MCF 10A (cell line): ENCODE measurements at regions of chr1 and their contacts with region 1.

Region 1: GRCh38 chr1:232837087-232837486 is 31.9 kb downstream of the MAP10 start:
- DNase-seq: peak; percentile 33
- H3K4me3 Mint-ChIP-seq: no peak overlapping the region
- H3K27ac Mint-ChIP-seq: no peak overlapping the region
- H3K4me1 Mint-ChIP-seq: peaks cover 4% of the 10 kb centered on the region
- H3K27me3 Mint-ChIP-seq: no peaks in the 10 kb centered on the region
- CTCF ChIP-seq: no peak

Region 2: GRCh38 chr1:232012773-232013386 is 824.2 kb before region 1 on chr1:
- CTCF ChIA-PET with region 1: no interaction called
- POLR2A ChIA-PET with region 1: no interaction called
- intact Hi-C with region 1: no loop called
- DNase-seq: peak; percentile 30
- H3K4me3 Mint-ChIP-seq: no peak overlapping the region
- H3K27ac Mint-ChIP-seq: no peak overlapping the region
- H3K4me1 Mint-ChIP-seq: peaks cover 4% of the 10 kb centered on the region
- H3K27me3 Mint-ChIP-seq: no peaks in the 10 kb centered on the region
- CTCF ChIP-seq: no peak

Region 3: DNA sequence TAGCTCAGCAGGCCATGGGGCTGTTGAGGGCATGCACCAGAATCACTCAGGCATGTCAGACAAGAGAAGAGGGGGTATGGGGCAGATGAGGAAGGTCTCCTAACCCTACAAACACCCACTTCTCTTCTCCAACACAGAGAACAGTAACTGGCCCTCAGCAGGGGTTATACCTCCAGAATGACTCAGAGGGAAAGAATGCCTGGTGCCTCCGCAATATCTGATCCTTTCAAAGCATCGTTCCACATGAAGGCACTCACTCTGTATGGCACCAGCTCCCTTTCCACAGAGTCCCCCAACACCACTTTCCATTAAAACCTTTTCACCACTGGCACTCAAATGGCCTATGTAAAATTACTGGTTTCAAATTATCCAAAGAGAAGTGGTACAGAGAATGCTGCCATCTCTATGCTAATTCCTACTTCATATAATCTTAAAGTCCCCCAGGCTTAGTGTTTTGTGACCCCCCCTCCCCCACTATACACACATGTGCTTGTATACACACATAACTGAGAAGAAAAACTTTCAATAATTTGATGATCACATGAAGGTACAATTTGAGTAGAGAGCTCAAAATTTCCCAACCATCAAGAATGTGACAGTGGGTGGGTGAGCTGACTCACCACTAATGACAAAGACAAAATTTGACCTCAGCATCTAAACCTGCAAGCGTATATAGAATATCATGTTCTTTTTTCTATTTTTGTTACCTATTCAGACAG is 298.7 kb before region 1 on chr1:
- CTCF ChIA-PET with region 1: no interaction called
- POLR2A ChIA-PET with region 1: no interaction called
- intact Hi-C with region 1: no loop called
- DNase-seq: peak; percentile 93
- H3K4me3 Mint-ChIP-seq: peak overlapping the region; percentile 48
- H3K27ac Mint-ChIP-seq: peak overlapping the region; percentile 86
- H3K4me1 Mint-ChIP-seq: peaks cover 48% of the 10 kb centered on the region
- H3K27me3 Mint-ChIP-seq: no peaks in the 10 kb centered on the region
- CTCF ChIP-seq: no peak

Region 4: GRCh38 chr1:232868793-232869491 is 31.9 kb after region 1 on chr1:
- CTCF ChIA-PET with region 1: no interaction called
- POLR2A ChIA-PET with region 1: interaction called, 13 read pairs
- intact Hi-C with region 1: no loop called
- DNase-seq: peak; percentile 100
- H3K4me3 Mint-ChIP-seq: no peak overlapping the region
- H3K27ac Mint-ChIP-seq: peak overlapping the region; percentile 79
- H3K4me1 Mint-ChIP-seq: peaks cover 21% of the 10 kb centered on the region
- H3K27me3 Mint-ChIP-seq: no peaks in the 10 kb centered on the region
- CTCF ChIP-seq: no peak